ENCODE measurements at regions of chr12 and their contacts with region 1.

Region 1: DNA sequence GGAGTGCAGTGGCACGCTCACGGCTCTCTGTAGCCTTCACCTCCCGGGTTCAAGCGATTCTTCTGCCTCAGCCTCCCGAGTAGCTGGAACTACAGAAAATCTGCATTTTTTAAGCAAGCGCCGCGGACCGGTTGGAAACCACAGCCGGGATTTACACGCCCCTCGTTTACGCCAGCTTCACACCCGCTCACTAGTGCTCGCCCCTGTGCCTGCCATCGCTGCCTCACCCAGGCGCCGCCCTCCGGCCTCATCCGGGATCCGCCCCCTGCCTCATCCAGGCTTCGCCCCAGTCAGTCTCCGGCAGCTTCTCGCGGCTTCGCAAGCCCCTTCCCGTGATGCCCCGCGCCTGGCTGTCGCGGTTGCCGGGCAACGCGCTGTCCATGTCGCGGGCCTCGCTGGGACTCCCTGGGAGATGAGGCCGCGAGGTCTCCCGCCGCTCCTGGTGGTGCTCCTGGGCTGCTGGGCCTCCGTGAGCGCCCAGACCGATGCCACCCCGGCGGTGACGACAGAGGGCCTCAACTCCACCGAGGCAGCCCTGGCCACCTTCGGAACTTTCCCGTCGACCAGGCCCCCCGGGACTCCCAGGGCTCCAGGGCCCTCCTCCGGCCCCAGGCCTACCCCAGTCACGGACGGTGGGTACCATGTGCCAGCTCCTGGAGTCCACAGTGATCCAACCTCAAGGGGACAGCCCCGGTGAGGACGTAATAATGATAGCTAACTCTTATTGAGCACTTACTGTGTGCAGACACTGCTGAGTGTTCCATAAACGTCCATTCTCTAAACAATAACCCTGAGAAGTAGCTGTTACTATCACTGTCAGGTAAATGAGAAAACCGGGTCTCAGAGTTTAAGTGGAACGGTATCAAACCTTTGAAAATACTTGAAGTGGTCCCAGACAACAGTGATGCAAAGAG is at the start of gene TCTN1:
- DNase-seq: peak; percentile 91
- ATAC-seq: peak; percentile 100
- H3K4me3 ChIP-seq: peak within 1 kb of the TSS; percentile 64
- H3K27ac ChIP-seq: peak within 1 kb of the TSS; percentile 56
- H3K4me1 ChIP-seq: no peaks in the 10 kb centered on the region
- H3K27me3 ChIP-seq: no peaks in the 10 kb centered on the region
- CTCF ChIP-seq: no peak
- POLR2A ChIP-seq: peak; percentile 62; the same call in 1 of the 2 replicates
- RAD21 ChIP-seq: no peak
- total RNA-seq, gene TCTN1: 11.1 and 11.7 TPM in 2 replicates

Region 2: GRCh38 chr12:110742718-110743570 is 128.9 kb after region 1 on chr12 and contains the start of gene PPP1CC:
- CTCF ChIA-PET with region 1: no interaction called
- POLR2A ChIA-PET with region 1: no interaction called
- dilution Hi-C with region 1: no loop called
- in situ Hi-C with region 1: no loop called
- intact Hi-C with region 1: loop called (anchors 5 kb)
- DNase-seq: peak; percentile 89
- ATAC-seq: peak; percentile 95
- H3K4me3 ChIP-seq: peak within 1 kb of the TSS; percentile 99
- H3K27ac ChIP-seq: peak within 1 kb of the TSS; percentile 92
- H3K4me1 ChIP-seq: peaks cover 13% of the 10 kb centered on the region
- H3K27me3 ChIP-seq: no peaks in the 10 kb centered on the region
- CTCF ChIP-seq: no peak
- POLR2A ChIP-seq: peak; percentile 93
- RAD21 ChIP-seq: no peak
- total RNA-seq, gene PPP1CC: 126 and 169 TPM in 2 replicates

Region 3: DNA sequence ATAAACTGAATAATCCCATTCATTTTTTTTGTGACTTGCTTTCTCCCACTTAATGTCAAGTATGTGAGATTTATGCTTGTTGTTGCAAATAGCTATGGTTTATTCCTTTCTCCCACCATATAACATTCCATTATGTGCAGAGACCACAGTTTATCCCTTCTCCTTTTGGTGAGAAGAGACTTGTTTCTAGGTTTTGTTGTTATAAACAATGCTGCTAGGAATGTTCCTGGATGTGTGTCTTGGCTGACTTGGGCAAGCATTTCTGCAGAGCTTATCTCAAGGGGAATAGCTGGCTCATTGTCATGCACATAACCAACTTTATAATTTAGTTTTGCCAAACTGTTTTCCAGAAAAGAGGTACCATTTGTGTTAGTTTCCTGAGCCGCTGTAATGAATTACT is 176.3 kb after region 1 on chr12:
- CTCF ChIA-PET with region 1: no interaction called
- POLR2A ChIA-PET with region 1: no interaction called
- dilution Hi-C with region 1: no loop called
- in situ Hi-C with region 1: no loop called
- intact Hi-C with region 1: no loop called
- DNase-seq: no peak
- ATAC-seq: peak; percentile 24; the same call in 1 of the 2 replicates
- H3K4me3 ChIP-seq: no peak overlapping the region
- H3K27ac ChIP-seq: no peak overlapping the region
- H3K4me1 ChIP-seq: no peaks in the 10 kb centered on the region
- H3K27me3 ChIP-seq: 0 out of 2 replicates have a peak, but pooled peaks cover 2% of the 10 kb centered on the region
- CTCF ChIP-seq: no peak
- POLR2A ChIP-seq: no peak
- RAD21 ChIP-seq: no peak